ENCODE measurements at regions of chr7 and their contacts with region 1.

Region 1: DNA sequence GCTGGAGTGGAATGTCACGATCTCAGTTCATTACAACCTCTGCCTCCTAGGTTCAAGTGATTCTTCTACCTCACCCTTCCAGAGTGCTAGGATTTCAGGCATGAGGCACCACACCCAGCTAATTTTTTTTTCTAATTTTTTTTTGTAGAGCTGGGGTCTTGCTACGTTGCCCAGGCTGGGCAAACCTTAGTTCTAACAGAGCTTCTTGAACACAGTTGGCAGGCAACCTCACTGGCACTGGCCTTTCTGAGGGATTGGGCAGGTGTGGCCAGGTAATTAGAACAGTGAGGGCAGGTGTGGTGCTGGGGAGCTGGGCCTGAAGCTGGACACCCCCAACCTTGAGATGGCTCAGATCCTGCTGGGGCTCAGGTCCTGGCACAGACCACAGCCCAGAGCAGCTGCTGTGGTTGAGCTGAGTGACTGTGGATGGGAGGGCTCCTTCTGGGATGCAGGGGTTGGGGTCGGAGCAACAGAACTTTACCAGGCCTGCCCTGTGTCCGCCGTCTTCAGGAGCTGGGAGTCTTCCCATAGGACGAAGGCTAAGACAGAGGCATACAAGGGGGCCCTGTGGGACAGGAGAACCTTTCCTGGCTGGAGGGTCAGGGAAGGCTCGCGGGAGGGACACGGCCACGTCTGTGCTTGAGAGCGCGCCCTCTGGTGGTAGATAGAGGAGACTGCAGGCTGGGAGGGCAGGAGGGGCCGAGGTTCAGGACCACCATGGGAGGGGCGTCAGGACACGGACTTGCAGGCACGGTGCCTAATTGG is 48.2 kb downstream of the COL26A1 start:
- DNase-seq: peak in 8 of 9 experiments; percentile 17 to 73 (median 46)
- ATAC-seq: peak; percentile 51
- H3K4me3 ChIP-seq: no peak overlapping the region
- H3K4me3 Mint-ChIP-seq: no peak overlapping the region
- H3K27ac ChIP-seq: no peak overlapping the region
- H3K27ac Mint-ChIP-seq: no peak overlapping the region
- H3K4me1 ChIP-seq: peaks cover 4% of the 10 kb centered on the region
- H3K4me1 Mint-ChIP-seq: peaks cover 5% of the 10 kb centered on the region
- H3K27me3 ChIP-seq: no peaks in the 10 kb centered on the region
- H3K27me3 Mint-ChIP-seq: peaks cover 9% of the 10 kb centered on the region
- CTCF ChIP-seq: peak; percentile 86

Region 2: DNA sequence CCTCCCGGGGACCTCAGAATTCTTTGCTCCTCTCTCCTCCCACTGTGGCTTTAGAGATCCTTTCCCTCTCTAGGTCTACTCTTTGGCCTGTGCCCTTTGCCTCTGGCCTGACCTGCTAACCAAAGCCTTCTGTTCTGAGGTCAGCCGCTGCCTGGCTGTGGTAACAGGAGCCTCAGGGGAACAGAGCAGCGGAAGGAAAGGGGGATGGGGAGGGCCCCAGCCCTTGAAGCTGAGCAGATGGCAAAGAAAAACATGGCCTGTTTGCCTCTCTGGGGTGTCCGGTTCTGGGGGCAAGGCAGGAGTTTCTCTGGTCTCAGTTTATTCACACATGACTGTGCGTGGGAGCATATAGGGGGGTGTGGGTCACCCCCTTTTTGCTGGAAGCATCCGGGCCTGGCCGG is 20.0 kb before region 1 on chr7:
- CTCF ChIA-PET with region 1: interaction called, 30 read pairs
- POLR2A ChIA-PET with region 1: no interaction called
- intact Hi-C with region 1: no loop called
- DNase-seq: peak in 6 of 9 experiments; percentile 2 to 71 (median 30)
- ATAC-seq: peak; percentile 40
- H3K4me3 ChIP-seq: no peak overlapping the region
- H3K4me3 Mint-ChIP-seq: peak overlapping the region; percentile 69
- H3K27ac ChIP-seq: no peak overlapping the region
- H3K27ac Mint-ChIP-seq: peak overlapping the region; percentile 77
- H3K4me1 ChIP-seq: peaks cover 35% of the 10 kb centered on the region
- H3K4me1 Mint-ChIP-seq: peaks cover 39% of the 10 kb centered on the region
- H3K27me3 ChIP-seq: no peaks in the 10 kb centered on the region
- H3K27me3 Mint-ChIP-seq: no peaks in the 10 kb centered on the region
- CTCF ChIP-seq: no peak

Region 3: DNA sequence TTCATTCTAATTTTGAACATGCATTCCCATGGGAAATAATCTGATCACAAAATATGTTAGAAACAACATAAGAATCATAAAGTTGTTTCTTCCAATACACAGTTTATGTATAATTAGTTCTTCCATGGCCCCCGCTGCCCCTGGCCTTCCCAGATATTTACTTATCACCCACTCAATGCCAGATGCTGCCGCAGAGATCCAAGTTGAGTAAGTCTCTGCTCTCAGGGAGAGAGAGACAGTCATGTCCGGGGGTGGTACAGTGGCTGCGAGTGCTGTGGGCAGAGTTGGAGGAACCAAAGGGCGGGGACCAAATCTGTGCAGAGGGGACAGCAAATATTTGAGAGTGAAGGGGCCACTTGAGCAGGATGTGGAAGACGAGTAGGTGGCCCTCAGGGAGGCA is 11.2 kb before region 1 on chr7:
- CTCF ChIA-PET with region 1: interaction called, 30 read pairs
- POLR2A ChIA-PET with region 1: no interaction called
- intact Hi-C with region 1: no loop called
- DNase-seq: no peak
- ATAC-seq: no peak
- H3K4me3 ChIP-seq: no peak overlapping the region
- H3K4me3 Mint-ChIP-seq: no peak overlapping the region
- H3K27ac ChIP-seq: no peak overlapping the region
- H3K27ac Mint-ChIP-seq: no peak overlapping the region
- H3K4me1 ChIP-seq: no peaks in the 10 kb centered on the region
- H3K4me1 Mint-ChIP-seq: peaks cover 4% of the 10 kb centered on the region
- H3K27me3 ChIP-seq: no peaks in the 10 kb centered on the region
- H3K27me3 Mint-ChIP-seq: peaks cover 17% of the 10 kb centered on the region
- CTCF ChIP-seq: no peak

Region 4: GRCh38 chr7:101436857-101437576 is 26.1 kb after region 1 on chr7:
- CTCF ChIA-PET with region 1: interaction called, 21 read pairs
- POLR2A ChIA-PET with region 1: no interaction called
- intact Hi-C with region 1: no loop called
- DNase-seq: no peak
- ATAC-seq: no peak
- H3K4me3 ChIP-seq: no peak overlapping the region
- H3K4me3 Mint-ChIP-seq: no peak overlapping the region
- H3K27ac ChIP-seq: no peak overlapping the region
- H3K27ac Mint-ChIP-seq: no peak overlapping the region
- H3K4me1 ChIP-seq: no peaks in the 10 kb centered on the region
- H3K4me1 Mint-ChIP-seq: no peaks in the 10 kb centered on the region
- H3K27me3 ChIP-seq: peaks cover 0 to 8% of the 10 kb centered on the region in 2 experiments
- H3K27me3 Mint-ChIP-seq: peaks cover 24% of the 10 kb centered on the region
- CTCF ChIP-seq: no peak

Region 5: GRCh38 chr7:101494602-101495329 is 83.8 kb after region 1 on chr7:
- CTCF ChIA-PET with region 1: no interaction called
- POLR2A ChIA-PET with region 1: no interaction called
- intact Hi-C with region 1: no loop called
- DNase-seq: no peak
- ATAC-seq: no peak
- H3K4me3 ChIP-seq: no peak overlapping the region
- H3K4me3 Mint-ChIP-seq: no peak overlapping the region
- H3K27ac ChIP-seq: no peak overlapping the region
- H3K27ac Mint-ChIP-seq: no peak overlapping the region
- H3K4me1 ChIP-seq: no peaks in the 10 kb centered on the region
- H3K4me1 Mint-ChIP-seq: no peaks in the 10 kb centered on the region
- H3K27me3 ChIP-seq: no peaks in the 10 kb centered on the region
- H3K27me3 Mint-ChIP-seq: peaks cover 3% of the 10 kb centered on the region
- CTCF ChIP-seq: no peak